ENCODE measurements at regions of chr12 and their contacts with region 1.

Region 1: DNA sequence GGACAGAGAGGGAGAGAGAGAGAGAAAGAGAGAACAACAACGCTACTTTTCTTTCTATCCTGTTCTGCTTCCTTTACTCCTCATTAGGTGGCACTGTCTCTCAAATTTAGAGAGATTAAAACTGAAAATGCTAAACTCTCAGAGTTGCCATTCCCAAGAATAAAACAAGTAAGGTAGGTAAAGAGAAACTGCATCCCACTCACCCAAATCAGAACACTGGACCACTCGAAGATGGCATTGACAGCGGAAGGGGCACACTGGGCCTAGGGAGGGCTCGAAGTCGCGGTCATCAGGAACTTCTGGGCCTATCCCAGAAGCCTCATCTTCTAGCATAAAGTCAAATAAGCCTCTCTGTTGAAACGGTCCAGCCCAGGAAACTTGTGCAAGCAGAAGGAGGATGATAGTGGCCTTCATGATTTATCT is 4.5 kb downstream of the DCN start:
- DNase-seq: no peak
- H3K4me3 ChIP-seq: peak overlapping the region; percentile 37 to 47
- H3K27ac ChIP-seq: peak overlapping the region; percentile 30 to 55
- H3K4me1 ChIP-seq: peaks cover 0 to 15% (median 3%) of the 10 kb centered on the region in 4 donors
- H3K27me3 ChIP-seq: no peaks in the 10 kb centered on the region
- CTCF ChIP-seq: peak; percentile 43 to 55

Region 2: DNA sequence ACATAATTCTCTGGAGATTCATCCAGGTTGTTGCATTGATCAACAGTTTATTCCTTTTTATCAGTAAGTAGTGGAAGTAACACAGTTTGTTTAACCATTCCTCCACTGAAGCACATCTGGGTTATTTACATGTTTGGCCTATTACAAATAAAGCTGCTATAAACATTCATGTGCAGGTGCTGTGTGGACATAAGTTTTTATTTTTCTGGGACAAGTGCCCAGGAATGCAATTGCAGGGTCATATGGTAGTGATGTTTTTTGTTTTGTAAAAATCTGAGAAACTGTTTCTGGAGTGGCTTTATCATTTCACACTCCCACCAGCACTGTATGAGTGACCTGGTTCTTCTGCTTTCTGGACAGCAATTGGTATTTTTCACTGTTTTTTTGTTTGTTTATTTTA is 728.5 kb before region 1 on chr12:
- intact Hi-C with region 1: no loop called
- DNase-seq: no peak
- H3K4me3 ChIP-seq: no peak overlapping the region
- H3K27ac ChIP-seq: no peak overlapping the region
- H3K4me1 ChIP-seq: no peaks in the 10 kb centered on the region
- H3K27me3 ChIP-seq: no peaks in the 10 kb centered on the region
- CTCF ChIP-seq: no peak

Region 3: DNA sequence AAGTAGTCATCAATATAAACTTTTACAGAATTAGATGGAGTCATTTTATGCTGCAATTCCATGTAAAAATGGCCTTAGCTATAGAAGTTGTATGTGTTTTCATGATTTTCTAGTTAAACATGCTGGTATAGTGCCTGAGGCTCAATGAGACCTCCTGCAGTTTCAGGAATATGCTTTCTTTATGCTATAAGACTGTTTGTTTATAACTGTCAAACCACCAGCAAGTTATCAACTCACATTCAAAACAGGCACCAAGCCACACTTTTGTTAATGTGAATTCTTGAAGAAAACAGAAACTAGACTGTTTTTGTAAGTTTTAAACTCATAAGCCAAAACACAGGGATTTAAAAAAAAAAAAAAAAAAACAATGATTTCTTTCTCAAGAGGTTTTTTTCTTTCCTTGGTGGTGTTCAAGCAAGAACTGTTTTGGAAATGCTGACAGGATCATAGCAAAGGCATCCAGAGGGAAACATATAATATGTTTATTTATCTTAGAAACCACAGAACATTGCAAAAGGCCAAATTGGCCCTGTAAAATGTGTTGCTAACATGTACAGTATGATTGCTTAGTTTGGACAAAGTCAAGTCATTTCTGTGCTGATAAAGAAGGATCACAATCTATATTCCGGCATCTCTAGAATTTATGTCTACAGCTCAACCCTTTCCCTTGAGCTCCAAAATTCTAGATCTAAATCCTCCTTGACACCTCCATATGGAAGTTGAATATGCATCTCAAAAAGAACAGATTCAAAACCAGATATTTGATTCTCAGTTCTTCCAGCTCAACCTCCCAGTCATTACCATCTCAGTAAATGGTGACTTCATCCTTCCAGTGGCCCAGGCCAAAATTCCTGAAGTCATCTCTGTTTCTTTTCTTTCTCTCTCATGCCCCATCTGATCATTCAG is 37.9 kb before region 1 on chr12:
- intact Hi-C with region 1: no loop called
- DNase-seq: peak in 1 of 2 donors; percentile 32
- H3K4me3 ChIP-seq: no peak overlapping the region
- H3K27ac ChIP-seq: peak overlapping the region; percentile 46 to 53
- H3K4me1 ChIP-seq: peaks cover 0 to 52% (median 17%) of the 10 kb centered on the region in 4 donors
- H3K27me3 ChIP-seq: no peaks in the 10 kb centered on the region
- CTCF ChIP-seq: no peak

Region 4: DNA sequence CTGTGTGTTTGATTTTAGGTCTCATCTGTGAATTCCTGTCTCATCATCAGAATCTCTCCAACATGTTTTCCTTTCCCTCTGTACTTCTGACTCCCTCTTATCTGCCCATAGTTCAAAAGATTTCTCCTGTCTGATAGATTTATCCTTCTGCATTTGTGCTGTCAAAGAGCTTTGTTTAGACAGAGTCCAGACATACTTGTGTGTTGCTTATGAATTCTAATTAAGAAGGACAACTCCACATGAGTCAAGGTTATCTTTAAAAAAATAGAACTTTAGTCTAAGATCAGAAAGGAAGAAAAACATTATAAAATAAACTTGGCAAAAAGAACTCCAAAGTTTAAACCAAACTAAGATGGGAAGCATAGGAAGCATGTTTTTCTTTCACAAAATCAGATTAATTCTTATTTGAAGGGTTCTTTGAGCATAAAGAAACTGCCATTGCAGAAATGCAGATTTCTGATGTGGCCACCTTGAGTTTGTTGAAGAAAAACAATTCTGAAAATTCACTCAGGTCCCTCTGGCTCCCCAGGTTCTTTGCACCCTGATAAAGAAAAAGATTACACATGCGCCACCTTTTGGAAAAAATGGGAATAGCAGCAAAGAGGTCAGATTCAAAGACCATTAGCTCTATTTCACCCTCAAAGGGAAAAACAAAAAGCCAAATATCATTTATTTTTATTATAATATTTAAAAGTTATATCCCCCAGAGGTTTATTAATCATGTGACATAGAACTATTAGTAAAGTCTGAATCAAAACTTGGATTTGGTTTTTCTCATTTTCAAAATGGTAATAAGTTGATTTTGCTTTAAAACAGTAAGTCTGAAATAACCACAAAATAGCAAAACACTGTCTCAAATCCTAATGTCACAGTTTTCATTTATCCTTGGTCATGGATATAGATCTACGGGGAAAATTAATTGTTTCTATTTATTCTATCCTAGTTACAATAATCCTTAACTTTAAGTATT is 148.2 kb after region 1 on chr12:
- intact Hi-C with region 1: loop called (anchors 5 kb)
- DNase-seq: peak in 1 of 2 donors; percentile 61
- H3K4me3 ChIP-seq: no peak overlapping the region
- H3K27ac ChIP-seq: peak overlapping the region in 1 of 2 donors; percentile 43
- H3K4me1 ChIP-seq: peaks cover 0 to 22% (median 2%) of the 10 kb centered on the region in 4 donors
- H3K27me3 ChIP-seq: no peaks in the 10 kb centered on the region
- CTCF ChIP-seq: peak; percentile 64 to 76

Measured in tibial artery (tissue), 4 donors.